ENCODE measurements at regions of chr10 and their contacts with region 1.

Region 1: DNA sequence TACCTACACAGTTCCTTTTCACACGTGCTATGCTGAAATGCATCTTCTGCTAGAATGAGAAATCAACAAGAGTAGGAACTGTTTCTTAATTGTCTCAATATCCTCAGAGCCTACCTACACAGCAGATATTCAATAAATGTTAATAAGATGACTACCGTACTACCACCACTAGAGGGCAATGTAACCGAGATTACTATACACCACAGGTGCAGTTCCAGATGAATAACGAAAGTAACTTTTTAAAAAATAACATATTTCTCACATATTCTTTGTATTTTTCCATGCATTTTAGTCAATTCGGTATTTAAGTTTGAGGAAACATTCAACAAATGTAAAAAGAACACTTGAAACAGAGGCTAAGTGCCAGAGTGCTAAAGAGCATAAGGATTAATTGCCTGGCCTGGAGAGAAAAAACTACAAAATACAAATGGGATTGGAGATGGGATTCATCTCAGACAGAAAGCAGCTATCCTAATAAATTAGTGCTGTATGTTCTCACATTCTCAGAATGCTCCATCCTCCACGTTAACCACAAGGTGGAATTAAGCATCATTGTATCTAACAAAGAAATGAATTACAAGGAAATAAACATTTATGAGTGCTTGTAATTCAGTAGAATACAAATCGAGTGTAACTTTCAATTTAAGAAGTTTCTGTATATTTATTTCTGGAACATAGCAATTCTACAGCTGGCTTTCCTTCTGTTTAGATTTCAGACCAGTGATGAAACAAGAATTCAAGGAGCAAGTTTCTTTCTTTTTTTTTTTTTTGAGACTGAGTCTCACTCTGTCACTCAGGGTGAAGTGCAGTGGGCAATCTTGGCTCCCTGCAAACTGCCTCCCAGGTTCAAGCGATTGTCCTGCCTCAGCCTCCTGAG is 20.3 kb upstream of the HECTD2 start:
- DNase-seq: no peak
- ATAC-seq: peak; percentile 93
- H3K4me3 ChIP-seq: no peak overlapping the region
- H3K27ac ChIP-seq: no peak overlapping the region
- H3K4me1 ChIP-seq: no peaks in the 10 kb centered on the region
- H3K27me3 ChIP-seq: peaks cover 21% of the 10 kb centered on the region
- CTCF ChIP-seq: peak; percentile 73; the same call in 1 of the 2 replicates

Region 2: DNA sequence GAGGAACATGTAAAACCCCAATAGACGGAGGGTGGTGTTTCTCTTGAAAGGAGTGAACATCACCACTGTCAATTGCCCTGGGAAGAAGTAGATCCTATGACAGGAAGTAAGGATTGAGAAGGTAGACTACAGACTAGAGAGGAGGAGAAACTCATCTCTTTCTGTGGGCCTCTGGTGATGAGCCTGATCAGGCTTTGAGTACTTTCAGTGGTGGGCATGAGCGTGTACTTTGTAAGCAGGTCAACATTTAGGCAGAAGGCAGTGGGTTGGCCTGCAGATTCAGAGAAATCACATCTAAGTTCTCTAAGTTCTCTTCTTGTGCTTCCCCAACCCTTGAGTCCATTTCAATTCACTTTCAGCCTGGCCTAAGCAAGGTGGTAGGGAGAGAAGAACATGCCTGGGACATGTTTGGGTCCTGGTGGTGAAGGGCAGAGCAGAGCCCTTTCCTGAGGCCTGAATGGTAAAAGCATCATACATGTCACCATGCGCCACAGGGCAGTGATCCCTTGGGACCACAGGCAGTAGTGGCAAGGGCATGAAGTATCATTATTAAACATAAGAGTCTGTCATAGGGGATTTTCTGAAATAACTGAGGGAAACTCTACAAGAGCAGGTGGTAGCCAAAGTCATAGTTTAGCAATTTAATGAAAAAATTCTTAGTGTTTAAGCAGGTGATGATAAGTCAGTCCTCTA is 412.6 kb before region 1 on chr10:
- CTCF ChIA-PET with region 1: interaction called, 19 read pairs
- POLR2A ChIA-PET with region 1: no interaction called
- in situ Hi-C with region 1: no loop called
- intact Hi-C with region 1: no loop called
- DNase-seq: no peak
- ATAC-seq: no peak
- H3K4me3 ChIP-seq: no peak overlapping the region
- H3K27ac ChIP-seq: no peak overlapping the region
- H3K4me1 ChIP-seq: no peaks in the 10 kb centered on the region
- H3K27me3 ChIP-seq: no peaks in the 10 kb centered on the region; the same call in 1 of the 2 replicates
- CTCF ChIP-seq: no peak

Region 3: GRCh38 chr10:91349381-91349780 is 40.5 kb before region 1 on chr10:
- CTCF ChIA-PET with region 1: no interaction called
- POLR2A ChIA-PET with region 1: no interaction called
- in situ Hi-C with region 1: no loop called
- intact Hi-C with region 1: no loop called
- DNase-seq: no peak
- ATAC-seq: no peak
- H3K4me3 ChIP-seq: no peak overlapping the region
- H3K27ac ChIP-seq: no peak overlapping the region
- H3K4me1 ChIP-seq: no peaks in the 10 kb centered on the region
- H3K27me3 ChIP-seq: no peaks in the 10 kb centered on the region
- CTCF ChIP-seq: no peak

Region 4: DNA sequence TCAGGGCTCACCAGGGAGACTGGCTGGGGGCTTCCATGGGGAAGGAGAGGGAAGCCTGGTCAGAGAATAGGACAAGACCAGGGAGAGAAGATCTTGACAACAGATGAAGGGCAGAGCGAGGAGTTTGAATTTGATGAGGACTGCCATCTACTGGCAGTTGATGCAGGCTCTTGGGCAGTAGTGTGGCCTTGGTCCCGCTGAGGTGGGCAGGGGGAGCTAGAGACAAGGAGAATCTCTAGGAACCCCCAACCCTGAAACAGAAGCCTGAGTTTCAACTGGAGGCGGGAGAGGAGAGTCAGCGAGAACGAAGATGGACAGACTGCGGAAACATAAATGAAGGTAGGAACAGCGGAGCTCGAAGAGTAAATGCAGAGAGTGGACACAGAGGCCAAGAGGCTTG is 162.0 kb after region 1 on chr10:
- CTCF ChIA-PET with region 1: no interaction called
- POLR2A ChIA-PET with region 1: no interaction called
- in situ Hi-C with region 1: no loop called
- intact Hi-C with region 1: loop called (anchors 5 kb)
- DNase-seq: peak; percentile 33
- ATAC-seq: peak; percentile 86
- H3K4me3 ChIP-seq: no peak overlapping the region
- H3K27ac ChIP-seq: no peak overlapping the region
- H3K4me1 ChIP-seq: no peaks in the 10 kb centered on the region
- H3K27me3 ChIP-seq: no peaks in the 10 kb centered on the region
- CTCF ChIP-seq: peak; percentile 86

Region 5: GRCh38 chr10:91632671-91633550 is 243.0 kb after region 1 on chr10 and contains the start of gene PPP1R3C:
- CTCF ChIA-PET with region 1: interaction called, 3 read pairs
- POLR2A ChIA-PET with region 1: no interaction called
- in situ Hi-C with region 1: no loop called
- intact Hi-C with region 1: loop called (anchors 5 kb)
- DNase-seq: peak; percentile 42
- ATAC-seq: peak; percentile 95
- H3K4me3 ChIP-seq: peak within 1 kb of the TSS; percentile 57 to 62
- H3K27ac ChIP-seq: peak within 1 kb of the TSS; percentile 45
- H3K4me1 ChIP-seq: peaks cover 7% of the 10 kb centered on the region; the same call in 1 of the 2 replicates
- H3K27me3 ChIP-seq: peaks cover 13% of the 10 kb centered on the region
- CTCF ChIP-seq: peak; percentile 75
- total RNA-seq, gene PPP1R3C: 1.2 TPM